H1 (cell line): ENCODE measurements at regions of chr3 and their contacts with region 1.

Region 1: DNA sequence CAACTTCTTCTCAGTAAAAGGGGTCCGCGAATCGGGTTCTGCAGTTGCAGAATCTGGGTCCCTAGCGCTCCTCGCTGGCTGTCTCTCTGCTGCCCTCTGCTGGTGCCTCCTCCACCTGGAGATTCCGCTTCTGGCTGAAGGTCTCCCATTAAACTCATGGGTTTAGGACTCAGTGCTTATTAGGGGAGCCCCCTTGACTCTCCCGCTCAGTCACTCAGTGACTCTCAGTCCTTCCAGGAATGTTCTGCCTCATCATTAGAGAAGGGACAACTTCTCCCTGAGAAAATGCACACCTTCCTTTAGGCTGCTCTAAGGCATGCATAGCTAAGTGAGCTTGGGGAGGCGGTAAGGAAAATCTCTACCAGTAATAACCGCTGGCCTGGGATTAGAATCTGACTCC is 7.1 kb downstream of the CPN2 start:
- DNase-seq: peak; percentile 58 to 96
- H3K4me3 ChIP-seq: no peak overlapping the region
- H3K27ac ChIP-seq: no peak overlapping the region
- H3K4me1 ChIP-seq: peaks cover 4 to 22% (median 17%) of the 10 kb centered on the region in 4 experiments
- H3K27me3 ChIP-seq: peaks cover 0 to 20% (median 11%) of the 10 kb centered on the region in 4 experiments; a peak in 6 of 7 replicates
- CTCF ChIP-seq: peak; percentile 86 to 90 (median 90)
- EP300 ChIP-seq: no peak
- POLR2A ChIP-seq: no peak
- RAD21 ChIP-seq: peak; percentile 70 to 81

Region 2: GRCh38 chr3:194323785-194324735 is 20.0 kb before region 1 on chr3:
- CTCF ChIA-PET with region 1: interaction called, 29 read pairs
- POLR2A ChIA-PET with region 1: no interaction called
- DNase-seq: no peak
- H3K4me3 ChIP-seq: no peak overlapping the region
- H3K27ac ChIP-seq: no peak overlapping the region
- H3K4me1 ChIP-seq: no peaks in the 10 kb centered on the region; a peak in 3 of 7 replicates
- H3K27me3 ChIP-seq: peaks cover 0 to 3% (median 0%) of the 10 kb centered on the region in 4 experiments; a peak in 1 of 7 replicates
- CTCF ChIP-seq: no peak
- EP300 ChIP-seq: no peak
- POLR2A ChIP-seq: no peak
- RAD21 ChIP-seq: no peak

Region 3: GRCh38 chr3:194386642-194387041 is 42.6 kb after region 1 on chr3:
- CTCF ChIA-PET with region 1: interaction called, 21 read pairs
- POLR2A ChIA-PET with region 1: no interaction called
- DNase-seq: peak in 1 of 2 experiments; percentile 24
- H3K4me3 ChIP-seq: no peak overlapping the region
- H3K27ac ChIP-seq: no peak overlapping the region
- H3K4me1 ChIP-seq: peaks cover 0 to 7% (median 2%) of the 10 kb centered on the region in 4 experiments; a peak in 3 of 7 replicates
- H3K27me3 ChIP-seq: peaks cover 0 to 2% (median 0%) of the 10 kb centered on the region in 4 experiments; a peak in 1 of 7 replicates
- CTCF ChIP-seq: no peak
- EP300 ChIP-seq: no peak
- POLR2A ChIP-seq: no peak
- RAD21 ChIP-seq: no peak

Region 4: DNA sequence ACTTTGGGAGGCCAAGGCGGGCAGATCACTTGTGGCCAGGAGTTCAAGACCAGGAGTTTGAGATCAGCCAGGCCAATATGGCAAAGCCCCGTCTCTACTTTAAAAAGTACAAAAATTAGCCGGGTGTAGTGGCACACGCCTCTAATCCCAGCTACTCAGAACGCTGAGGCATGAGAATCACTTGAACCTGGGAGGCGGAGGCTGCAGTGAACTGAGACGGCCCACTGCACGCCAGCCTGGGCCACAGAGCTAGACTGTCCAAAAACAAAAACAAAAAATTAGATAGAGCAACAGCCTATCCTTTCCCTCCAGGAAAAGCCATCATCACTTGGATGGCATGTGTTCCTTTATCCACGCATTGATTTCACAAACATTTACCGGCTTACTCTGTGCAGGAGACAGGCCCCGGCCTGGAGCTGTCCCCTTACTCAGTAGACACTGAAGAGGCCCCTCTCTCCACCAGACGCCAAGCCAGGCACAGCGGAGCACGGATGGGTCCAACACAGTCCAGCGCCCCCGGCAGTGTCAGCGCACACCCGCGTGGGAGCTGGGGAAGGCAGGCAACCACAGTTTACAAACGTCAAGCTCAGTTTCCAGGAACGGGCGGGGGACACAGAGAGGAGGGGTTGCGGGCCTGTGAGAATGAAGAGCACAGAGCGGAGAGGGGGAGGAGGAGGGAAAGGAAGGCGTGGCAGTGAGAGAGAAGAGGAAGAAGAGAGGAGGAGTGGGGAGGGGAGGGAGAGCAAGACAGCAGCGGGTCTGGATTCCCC is 52.0 kb after region 1 on chr3:
- CTCF ChIA-PET with region 1: interaction called, 176 read pairs
- POLR2A ChIA-PET with region 1: interaction called, 15 read pairs
- DNase-seq: peak in 1 of 2 experiments; percentile 65
- H3K4me3 ChIP-seq: peak overlapping the region in 3 of 4 experiments; percentile 46 to 57 (median 51); a peak in 4 of 8 replicates
- H3K27ac ChIP-seq: no peak overlapping the region
- H3K4me1 ChIP-seq: peaks cover 0 to 11% (median 5%) of the 10 kb centered on the region in 4 experiments; a peak in 5 of 7 replicates
- H3K27me3 ChIP-seq: peaks cover 16 to 35% (median 25%) of the 10 kb centered on the region in 4 experiments
- CTCF ChIP-seq: no peak
- EP300 ChIP-seq: no peak
- POLR2A ChIP-seq: no peak
- RAD21 ChIP-seq: no peak

Region 5: GRCh38 chr3:194404365-194405140 is 60.5 kb after region 1 on chr3:
- CTCF ChIA-PET with region 1: interaction called, 176 read pairs
- POLR2A ChIA-PET with region 1: interaction called, 3 read pairs
- DNase-seq: no peak
- H3K4me3 ChIP-seq: no peak overlapping the region
- H3K27ac ChIP-seq: no peak overlapping the region
- H3K4me1 ChIP-seq: no peaks in the 10 kb centered on the region
- H3K27me3 ChIP-seq: no peaks in the 10 kb centered on the region
- CTCF ChIP-seq: peak in 2 of 3 experiments; percentile 41 to 52; a peak in 2 of 4 replicates
- EP300 ChIP-seq: no peak
- POLR2A ChIP-seq: no peak
- RAD21 ChIP-seq: peak; percentile 68 to 77

Region 6: DNA sequence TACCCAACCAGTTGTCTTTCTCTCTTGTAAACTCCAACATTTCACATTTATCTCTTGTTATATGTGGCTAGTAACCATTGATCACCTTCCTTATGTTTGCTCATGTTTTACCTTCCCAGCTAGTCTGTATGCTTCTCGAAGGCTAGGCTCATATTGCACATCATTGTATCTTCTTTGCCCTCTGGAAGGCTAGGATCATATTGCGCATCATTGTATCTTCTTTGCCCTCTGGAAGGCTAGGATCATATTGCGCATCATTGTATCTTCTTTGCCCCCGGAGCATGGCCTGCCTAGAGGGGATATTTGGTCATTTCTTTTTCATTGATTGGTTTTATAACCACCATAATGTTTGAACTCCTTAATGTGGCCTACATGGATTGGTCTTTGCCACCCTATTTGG is 182.2 kb after region 1 on chr3:
- CTCF ChIA-PET with region 1: no interaction called
- POLR2A ChIA-PET with region 1: no interaction called
- DNase-seq: no peak
- H3K4me3 ChIP-seq: no peak overlapping the region
- H3K27ac ChIP-seq: no peak overlapping the region
- H3K4me1 ChIP-seq: no peaks in the 10 kb centered on the region
- H3K27me3 ChIP-seq: no peaks in the 10 kb centered on the region
- CTCF ChIP-seq: no peak
- EP300 ChIP-seq: no peak
- POLR2A ChIP-seq: no peak
- RAD21 ChIP-seq: no peak

Region 7: DNA sequence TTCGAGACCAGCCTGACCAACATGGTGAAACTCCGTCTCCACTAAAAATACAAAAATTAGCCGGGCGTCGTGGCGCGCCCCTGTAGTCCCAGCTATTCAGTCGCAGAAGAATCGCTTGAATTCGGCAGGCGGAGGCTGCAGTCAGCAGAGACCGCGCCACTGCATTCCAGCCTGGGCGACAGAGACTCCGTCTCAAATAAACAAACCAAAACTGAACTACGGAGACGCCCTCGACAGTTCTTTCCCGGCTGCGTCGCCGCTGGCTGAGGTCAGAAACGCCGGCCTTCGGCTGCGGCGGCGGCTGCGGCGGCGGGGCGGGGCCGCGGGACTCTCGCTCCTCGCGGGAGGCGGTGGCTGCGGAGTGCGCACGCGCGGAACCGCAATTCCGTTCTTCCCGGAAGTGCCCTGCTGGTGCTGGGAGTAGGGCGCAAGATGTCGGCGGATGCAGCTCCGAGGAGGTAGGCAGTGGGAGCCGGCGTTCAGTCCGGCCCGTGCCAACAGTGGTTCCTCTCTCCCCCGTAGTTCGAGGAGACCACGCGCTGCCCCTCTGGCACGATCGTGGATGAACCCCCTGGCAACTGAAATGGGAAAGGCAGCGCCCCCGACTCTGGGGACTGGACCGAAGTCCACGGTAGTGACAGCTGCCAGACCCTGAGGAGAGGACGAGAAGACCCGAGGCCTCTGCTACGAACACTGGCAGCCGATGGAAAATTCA is 239.7 kb after region 1 on chr3:
- CTCF ChIA-PET with region 1: no interaction called
- POLR2A ChIA-PET with region 1: no interaction called
- DNase-seq: peak; percentile 65 to 97
- H3K4me3 ChIP-seq: peak overlapping the region; percentile 90 to 99 (median 98)
- H3K27ac ChIP-seq: peak overlapping the region; percentile 75
- H3K4me1 ChIP-seq: no peaks in the 10 kb centered on the region
- H3K27me3 ChIP-seq: no peaks in the 10 kb centered on the region
- CTCF ChIP-seq: no peak
- EP300 ChIP-seq: peak in 1 of 2 experiments; percentile 64; a peak in 1 of 3 replicates
- POLR2A ChIP-seq: peak; percentile 93 to 96
- RAD21 ChIP-seq: no peak